CD14-positive monocyte (primary cell): ENCODE measurements at regions of chr1 and their contacts with region 1.

Region 1: GRCh38 chr1:111030590-111030989 is 66.9 kb upstream of the LRIF1 start:
- DNase-seq: peak; percentile 23 to 62 (median 55)
- H3K4me3 ChIP-seq: no peak overlapping the region
- H3K4me3 Mint-ChIP-seq: no peak overlapping the region
- H3K27ac ChIP-seq: no peak overlapping the region
- H3K27ac Mint-ChIP-seq: no peak overlapping the region
- H3K4me1 ChIP-seq: no peaks in the 10 kb centered on the region
- H3K4me1 Mint-ChIP-seq: peaks cover 2% of the 10 kb centered on the region
- H3K27me3 ChIP-seq: peaks cover 0 to under 1% of the 10 kb centered on the region in 2 donors
- H3K27me3 Mint-ChIP-seq: peaks cover 5 to 13% (median 9%) of the 10 kb centered on the region in 3 donors
- CTCF ChIP-seq: peak; percentile 90

Region 2: DNA sequence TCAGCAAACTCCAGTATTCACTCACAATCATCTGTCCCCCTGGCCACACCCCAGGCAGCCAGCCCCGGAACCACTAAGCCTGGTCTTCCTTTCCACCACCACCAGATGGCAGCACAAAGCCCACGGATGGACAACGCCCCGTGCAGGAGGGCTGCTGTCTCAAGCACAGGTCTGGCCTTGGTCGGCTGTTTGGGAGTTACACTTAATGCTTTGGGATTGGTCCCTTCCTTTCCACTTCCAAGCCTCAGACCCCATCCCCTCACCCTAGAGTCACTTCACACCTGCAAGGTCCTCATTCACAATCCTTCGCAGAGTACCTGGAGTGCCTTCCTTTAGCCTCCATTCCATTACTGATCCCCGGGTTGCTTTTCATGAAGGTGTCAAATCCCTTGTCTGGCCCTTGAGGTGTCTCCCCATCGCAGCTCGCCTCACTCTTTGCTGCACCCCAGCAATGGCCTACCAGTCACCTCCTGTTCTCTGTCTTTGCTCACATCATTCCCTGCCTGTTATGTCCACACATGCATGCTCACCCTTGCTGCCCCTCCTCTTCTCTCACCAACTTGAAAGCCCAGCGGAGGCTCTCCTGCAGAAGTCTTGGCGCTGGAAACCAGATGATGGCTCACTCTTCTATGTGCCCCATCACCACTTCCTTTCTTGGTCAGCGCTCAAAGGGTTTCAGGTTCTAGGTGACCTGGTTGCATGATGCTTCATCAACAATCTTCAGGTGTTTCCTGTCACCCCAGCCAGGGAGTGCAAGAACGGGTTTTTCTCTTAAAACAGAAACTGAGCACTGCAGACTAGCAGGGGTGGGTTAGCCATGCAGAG is 399.5 kb before region 1 on chr1:
- intact Hi-C with region 1: no loop called
- DNase-seq: peak; percentile 70 to 85 (median 73)
- H3K4me3 ChIP-seq: no peak overlapping the region
- H3K4me3 Mint-ChIP-seq: no peak overlapping the region
- H3K27ac ChIP-seq: no peak overlapping the region
- H3K27ac Mint-ChIP-seq: no peak overlapping the region
- H3K4me1 ChIP-seq: peaks cover 62 to 65% of the 10 kb centered on the region in 2 donors
- H3K4me1 Mint-ChIP-seq: peaks cover 58% of the 10 kb centered on the region
- H3K27me3 ChIP-seq: no peaks in the 10 kb centered on the region
- H3K27me3 Mint-ChIP-seq: peaks cover 0 to 4% (median 0%) of the 10 kb centered on the region in 3 donors
- CTCF ChIP-seq: peak; percentile 83

Region 3: DNA sequence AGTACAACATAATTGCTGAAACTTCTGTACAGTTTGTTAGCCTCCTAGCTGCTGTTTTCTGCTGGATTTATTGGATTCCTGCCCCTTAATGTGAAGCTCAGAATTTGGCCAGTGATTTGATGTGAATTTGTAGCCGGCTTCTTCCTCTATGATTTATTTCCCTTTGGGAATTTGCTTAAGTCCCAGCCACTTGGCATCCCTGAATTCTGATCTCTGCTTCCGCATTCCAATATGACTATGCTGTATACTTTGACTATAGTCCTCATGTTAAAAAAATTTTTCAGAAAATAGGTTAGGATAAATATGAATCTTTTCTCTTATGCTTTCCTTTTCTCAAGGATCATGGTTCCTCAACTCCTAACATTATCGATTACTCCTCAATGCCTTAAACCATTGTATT is 54.5 kb before region 1 on chr1:
- intact Hi-C with region 1: no loop called
- DNase-seq: no peak
- H3K4me3 ChIP-seq: no peak overlapping the region
- H3K4me3 Mint-ChIP-seq: peak overlapping the region in 1 of 2 donors; percentile 31
- H3K27ac ChIP-seq: no peak overlapping the region
- H3K27ac Mint-ChIP-seq: no peak overlapping the region
- H3K4me1 ChIP-seq: no peaks in the 10 kb centered on the region
- H3K4me1 Mint-ChIP-seq: no peaks in the 10 kb centered on the region
- H3K27me3 ChIP-seq: peaks cover 2 to 20% of the 10 kb centered on the region in 2 donors
- H3K27me3 Mint-ChIP-seq: peaks cover 10 to 37% (median 21%) of the 10 kb centered on the region in 3 donors
- CTCF ChIP-seq: no peak

Region 4: DNA sequence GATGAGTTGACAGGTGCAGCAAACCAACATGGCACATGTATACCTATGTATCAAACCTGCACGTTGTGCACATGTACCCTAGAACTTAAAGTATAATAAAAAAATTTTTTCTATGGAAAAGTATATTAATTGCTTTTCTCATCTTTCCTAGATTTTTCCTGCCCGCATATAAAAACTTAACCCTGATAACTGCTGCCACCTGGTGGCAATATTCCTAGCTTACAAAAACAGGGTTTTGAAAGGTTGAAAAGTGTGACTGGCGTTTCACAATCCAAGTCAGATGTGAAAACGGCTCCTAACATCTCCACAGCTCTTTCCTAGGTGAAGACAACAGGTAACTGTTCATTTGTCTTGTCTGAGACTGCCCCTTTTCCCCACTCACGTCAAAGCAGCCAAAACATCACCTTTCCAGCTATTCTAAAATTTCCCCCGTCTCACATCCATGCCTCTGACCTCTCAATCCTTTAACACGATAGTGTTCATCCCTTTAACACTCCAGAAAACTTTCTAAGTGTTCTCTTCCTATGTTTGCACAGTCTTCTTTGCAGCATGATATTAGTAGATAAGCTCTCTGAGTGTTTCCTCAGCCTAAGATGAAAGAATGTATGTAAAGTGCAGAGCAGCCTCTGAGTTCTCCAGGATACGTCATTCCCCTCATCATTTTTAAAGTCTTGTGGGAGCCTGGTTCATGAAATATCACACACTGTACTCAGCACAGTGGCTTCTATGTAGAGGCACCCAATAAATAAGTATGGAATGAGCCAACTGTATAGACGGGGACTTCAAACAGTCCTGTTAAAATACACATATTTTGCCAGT is 369.4 kb after region 1 on chr1:
- intact Hi-C with region 1: loop called in 1 of 2 experiments (anchors 5 kb)
- DNase-seq: peak; percentile 14 to 52 (median 35)
- H3K4me3 ChIP-seq: no peak overlapping the region
- H3K4me3 Mint-ChIP-seq: no peak overlapping the region
- H3K27ac ChIP-seq: no peak overlapping the region
- H3K27ac Mint-ChIP-seq: no peak overlapping the region
- H3K4me1 ChIP-seq: no peaks in the 10 kb centered on the region
- H3K4me1 Mint-ChIP-seq: peaks cover 3% of the 10 kb centered on the region
- H3K27me3 ChIP-seq: peaks cover 0 to 5% of the 10 kb centered on the region in 2 donors
- H3K27me3 Mint-ChIP-seq: peaks cover 14 to 21% (median 18%) of the 10 kb centered on the region in 3 donors
- CTCF ChIP-seq: peak; percentile 79